ENCODE measurements at regions of chr2 and their contacts with region 1.

Region 1: GRCh38 chr2:101597351-101597944 is 100.1 kb upstream of the MAP4K4 start:
- DNase-seq: no peak

Region 2: GRCh38 chr2:100730346-100730745 is 867.1 kb before region 1 on chr2:
- intact Hi-C with region 1: loop called in 1 of 2 experiments (anchors 5 kb)
- DNase-seq: peak; percentile 86

Region 3: GRCh38 chr2:101630224-101630949 is 32.9 kb after region 1 on chr2:
- intact Hi-C with region 1: loop called in 1 of 2 experiments (anchors 1 kb)
- DNase-seq: no peak

Measured in posterior vena cava (tissue), 2 donors.